ENCODE measurements at regions of chr12 and their contacts with region 1.

Region 1: DNA sequence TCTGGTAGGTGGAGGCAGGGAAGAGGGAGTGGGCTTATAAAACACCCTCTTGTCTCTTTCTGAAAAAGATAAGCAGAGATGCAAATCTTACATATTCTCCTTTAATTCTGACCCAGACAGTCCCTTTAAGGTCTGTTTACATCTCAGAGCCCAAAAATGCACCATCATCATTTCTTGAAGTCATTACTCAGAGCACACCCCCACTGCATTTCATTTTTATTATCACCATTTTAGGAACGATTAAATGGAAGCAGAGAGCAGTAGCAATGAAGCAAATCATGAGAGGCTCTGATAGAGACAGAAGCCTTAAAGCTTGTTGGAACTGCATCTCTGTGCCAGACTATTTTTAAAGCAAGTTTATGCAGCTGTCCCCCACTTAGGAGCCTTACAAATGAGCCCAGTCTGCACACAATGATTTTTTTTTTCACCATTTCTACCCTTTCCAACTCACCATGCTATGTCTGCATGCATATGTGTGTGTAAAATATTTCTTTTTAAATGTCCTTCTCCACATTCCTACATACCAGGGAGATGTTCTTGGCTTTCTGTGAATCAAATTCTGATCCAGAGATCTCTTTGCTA is 311.0 kb downstream of the GRIN2B start:
- DNase-seq: no peak
- ATAC-seq: no peak
- H3K4me3 ChIP-seq: no peak overlapping the region
- H3K4me3 Mint-ChIP-seq: no peak overlapping the region
- H3K27ac ChIP-seq: no peak overlapping the region
- H3K27ac Mint-ChIP-seq: no peak overlapping the region
- H3K4me1 ChIP-seq: no peaks in the 10 kb centered on the region
- H3K4me1 Mint-ChIP-seq: no peaks in the 10 kb centered on the region
- H3K27me3 ChIP-seq: no peaks in the 10 kb centered on the region
- H3K27me3 Mint-ChIP-seq: peaks cover 2 to 7% of the 10 kb centered on the region in 2 donors
- CTCF ChIP-seq: no peak

Region 2: DNA sequence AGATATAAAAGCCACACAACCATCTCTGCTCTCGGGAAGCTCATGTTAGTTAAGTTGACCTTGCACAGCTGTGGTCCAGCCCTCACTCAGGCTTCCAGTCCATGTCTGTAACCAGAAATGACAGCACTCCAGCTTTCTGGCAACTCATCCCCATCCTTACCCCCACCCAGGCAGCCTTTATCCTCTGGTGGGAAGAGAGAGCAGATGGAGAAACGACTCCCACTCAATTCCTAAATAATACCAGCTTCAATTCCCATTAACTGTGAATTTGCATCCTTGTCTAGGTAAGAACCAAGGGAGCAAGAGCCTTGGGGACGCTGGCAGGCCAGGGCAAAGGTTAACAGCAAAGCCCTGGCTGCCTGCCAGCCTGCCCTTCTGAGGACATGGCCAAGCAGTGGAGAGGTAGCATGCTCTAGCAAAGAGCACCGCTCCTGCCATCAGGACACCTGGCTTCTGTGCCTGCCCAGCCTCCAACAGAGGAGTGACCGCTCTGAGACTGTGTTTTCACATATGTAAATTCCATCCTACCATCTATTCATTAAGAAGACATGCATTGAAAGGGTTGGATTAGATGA is 74.8 kb after region 1 on chr12:
- intact Hi-C with region 1: no loop called
- DNase-seq: no peak
- ATAC-seq: no peak
- H3K4me3 ChIP-seq: no peak overlapping the region
- H3K4me3 Mint-ChIP-seq: no peak overlapping the region
- H3K27ac ChIP-seq: no peak overlapping the region
- H3K27ac Mint-ChIP-seq: no peak overlapping the region
- H3K4me1 ChIP-seq: no peaks in the 10 kb centered on the region
- H3K4me1 Mint-ChIP-seq: no peaks in the 10 kb centered on the region
- H3K27me3 ChIP-seq: no peaks in the 10 kb centered on the region
- H3K27me3 Mint-ChIP-seq: peaks cover 3 to 28% of the 10 kb centered on the region in 2 donors
- CTCF ChIP-seq: no peak

Region 3: DNA sequence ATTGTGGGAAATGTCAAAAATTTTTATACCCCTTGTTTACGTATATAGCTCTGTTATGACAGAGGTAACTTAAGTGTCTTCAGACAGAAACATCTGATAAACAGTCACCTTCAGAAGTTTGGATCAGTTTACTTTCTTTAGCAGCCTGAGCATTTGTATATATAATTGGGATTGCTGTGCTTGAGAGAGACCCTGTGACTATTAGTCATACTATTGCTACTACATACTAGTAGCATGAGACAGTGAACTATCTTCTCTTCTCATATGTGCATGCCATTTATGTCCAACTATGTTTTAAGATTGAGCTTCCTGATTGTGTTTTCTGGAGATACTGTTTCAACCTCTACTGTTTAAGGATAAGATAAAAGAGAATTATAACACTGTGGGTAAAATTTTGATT is 1404.0 kb after region 1 on chr12:
- intact Hi-C with region 1: loop called (anchors 10 kb)
- DNase-seq: no peak
- ATAC-seq: no peak
- H3K4me3 ChIP-seq: no peak overlapping the region
- H3K4me3 Mint-ChIP-seq: no peak overlapping the region
- H3K27ac ChIP-seq: no peak overlapping the region
- H3K27ac Mint-ChIP-seq: no peak overlapping the region
- H3K4me1 ChIP-seq: no peaks in the 10 kb centered on the region
- H3K4me1 Mint-ChIP-seq: no peaks in the 10 kb centered on the region
- H3K27me3 ChIP-seq: no peaks in the 10 kb centered on the region
- H3K27me3 Mint-ChIP-seq: peaks cover 3 to 14% of the 10 kb centered on the region in 2 donors
- CTCF ChIP-seq: no peak

Measured in natural killer cell (primary cell).